GM18951 (cell line): ENCODE measurements at regions of chr19 and their contacts with region 1.

Region 1: DNA sequence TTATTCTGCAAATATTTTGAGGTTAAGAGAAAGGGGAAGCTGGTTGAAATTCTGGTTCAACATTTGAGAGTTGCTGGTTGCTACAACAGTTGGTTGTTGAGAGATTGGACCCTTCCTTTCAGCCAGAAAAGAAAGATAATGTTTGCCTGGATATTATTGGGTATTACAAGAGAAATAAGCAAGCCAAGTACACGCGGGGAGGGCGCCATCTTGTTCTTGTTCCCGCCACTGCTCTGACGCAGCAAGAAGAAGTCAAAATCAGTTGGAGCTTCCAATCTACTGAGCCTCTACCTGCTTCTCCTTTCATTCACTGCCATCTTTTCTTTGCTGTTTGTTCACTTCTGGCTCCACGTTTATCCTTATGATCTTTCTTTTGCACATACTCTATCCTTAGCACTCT is 18.4 kb downstream of the BSPH1 start:
- POLR2A ChIP-seq: no peak

Region 2: DNA sequence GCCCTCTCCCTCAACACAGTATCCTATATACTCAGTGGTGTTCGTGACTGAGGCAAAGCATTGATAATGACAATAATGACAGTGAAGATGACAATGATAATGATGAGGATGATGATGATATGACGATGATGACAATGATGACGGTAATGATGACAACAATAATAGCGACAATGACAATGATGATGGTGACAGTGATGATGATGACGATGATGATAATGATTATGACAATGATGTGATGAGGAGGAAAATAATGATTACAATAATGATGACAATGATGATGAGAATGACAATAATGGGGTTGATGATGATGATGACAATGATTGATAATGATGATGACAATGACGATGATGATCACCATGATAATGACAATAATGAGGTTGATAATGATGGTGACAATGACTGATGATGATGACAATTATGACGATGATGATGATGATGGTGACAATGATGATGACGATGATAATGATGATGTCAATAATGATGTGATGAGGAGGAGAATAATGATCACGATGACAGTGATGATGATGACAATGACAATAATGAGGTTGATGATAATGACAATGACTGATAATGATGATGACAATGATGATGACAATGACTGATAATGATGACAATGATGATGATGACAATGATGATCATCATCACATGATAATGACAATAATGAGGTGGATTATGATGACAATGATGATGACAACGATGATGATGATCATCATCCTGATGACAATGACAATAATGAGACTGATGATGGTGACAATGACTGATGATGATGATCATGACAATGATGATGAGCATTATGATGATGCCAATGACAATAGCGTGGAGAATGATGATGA is 37.6 kb after region 1 on chr19:
- in situ Hi-C with region 1: no loop called
- POLR2A ChIP-seq: no peak

Region 3: GRCh38 chr19:48053856-48054255 is 80.3 kb after region 1 on chr19:
- in situ Hi-C with region 1: no loop called
- POLR2A ChIP-seq: no peak

Region 4: DNA sequence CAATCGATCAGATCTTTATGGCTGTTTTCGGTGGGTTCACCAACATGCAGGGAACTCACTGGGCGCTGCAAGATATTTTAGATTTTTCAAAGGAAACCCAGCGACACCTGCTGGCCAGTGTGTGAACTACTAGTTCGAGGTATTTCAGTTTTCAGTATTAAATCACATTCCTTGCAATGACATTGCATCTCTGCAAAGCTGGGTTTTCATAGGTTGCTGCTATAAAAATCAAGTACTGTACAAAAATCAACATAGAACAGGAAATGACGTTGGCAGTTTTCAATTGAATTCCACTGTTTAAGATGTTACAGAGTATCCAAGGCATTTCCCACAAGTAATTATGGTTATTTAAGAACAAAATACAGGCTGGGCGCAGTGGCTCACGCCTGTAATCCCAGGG is 179.0 kb after region 1 on chr19:
- in situ Hi-C with region 1: loop called (anchors 10 kb)
- POLR2A ChIP-seq: no peak

Region 5: DNA sequence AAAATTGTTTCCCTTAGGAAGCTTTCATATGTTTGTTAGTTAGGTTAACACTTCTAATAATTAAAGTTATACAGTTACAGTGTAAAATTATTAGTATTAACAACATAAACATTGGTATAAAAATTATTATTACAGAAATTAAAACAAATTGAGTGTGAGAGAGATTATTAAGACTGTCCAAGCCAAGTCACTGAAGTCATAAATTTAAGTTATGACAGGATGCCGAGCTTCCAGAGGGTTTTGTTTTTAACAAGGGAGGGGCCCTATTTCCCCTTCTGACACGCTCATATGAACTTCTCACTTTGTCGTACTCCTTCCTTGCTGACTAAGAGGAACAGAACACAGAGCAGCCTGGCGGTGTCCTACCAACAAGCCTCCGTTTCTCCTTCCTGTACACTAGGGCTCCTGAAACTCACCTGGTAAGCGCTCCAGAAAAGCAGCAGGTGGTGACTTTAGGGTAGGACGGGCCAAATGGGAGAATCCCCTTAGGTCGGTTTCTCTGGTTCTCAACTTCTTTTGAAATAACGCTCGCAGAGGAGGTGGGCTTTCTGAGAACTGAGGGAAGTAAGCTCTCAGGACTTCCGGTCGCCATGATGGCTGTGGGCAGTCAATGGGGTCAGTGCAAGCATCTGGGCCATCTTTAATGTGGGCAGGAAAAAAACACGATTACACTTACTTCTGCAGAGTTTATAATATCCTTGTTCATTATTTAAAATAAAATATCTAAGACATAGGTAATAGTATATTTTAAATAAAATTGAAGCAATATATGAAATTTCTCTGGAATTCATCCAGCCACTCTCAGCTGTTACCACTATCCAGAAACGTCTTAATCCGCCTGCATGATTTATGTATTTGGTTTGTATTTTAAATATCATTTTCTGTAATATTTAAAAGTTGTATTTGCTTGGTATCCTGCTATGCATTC is 282.1 kb after region 1 on chr19 and contains the start of gene CARD8:
- in situ Hi-C with region 1: loop called (anchors 25 kb)
- POLR2A ChIP-seq: peak; percentile 70